ENCODE measurements at regions of chr2 and their contacts with region 1.

Region 1: GRCh38 chr2:195561203-195562032 is 95.6 kb upstream of the SLC39A10 start:
- DNase-seq: peak; percentile 7 to 85
- H3K4me3 ChIP-seq: no peak overlapping the region
- H3K27ac ChIP-seq: peak overlapping the region; percentile 32; the same call in 1 of the 2 replicates
- H3K4me1 ChIP-seq: peaks cover 10% of the 10 kb centered on the region; the same call in 1 of the 2 replicates
- H3K27me3 ChIP-seq: no peaks in the 10 kb centered on the region
- CTCF ChIP-seq: no peak

Region 2: GRCh38 chr2:195168369-195168768 is 393.0 kb before region 1 on chr2:
- CTCF ChIA-PET with region 1: no interaction called
- POLR2A ChIA-PET with region 1: no interaction called
- intact Hi-C with region 1: no loop called
- DNase-seq: no peak
- H3K4me3 ChIP-seq: no peak overlapping the region
- H3K27ac ChIP-seq: no peak overlapping the region
- H3K4me1 ChIP-seq: no peaks in the 10 kb centered on the region
- H3K27me3 ChIP-seq: no peaks in the 10 kb centered on the region
- CTCF ChIP-seq: no peak

Region 3: DNA sequence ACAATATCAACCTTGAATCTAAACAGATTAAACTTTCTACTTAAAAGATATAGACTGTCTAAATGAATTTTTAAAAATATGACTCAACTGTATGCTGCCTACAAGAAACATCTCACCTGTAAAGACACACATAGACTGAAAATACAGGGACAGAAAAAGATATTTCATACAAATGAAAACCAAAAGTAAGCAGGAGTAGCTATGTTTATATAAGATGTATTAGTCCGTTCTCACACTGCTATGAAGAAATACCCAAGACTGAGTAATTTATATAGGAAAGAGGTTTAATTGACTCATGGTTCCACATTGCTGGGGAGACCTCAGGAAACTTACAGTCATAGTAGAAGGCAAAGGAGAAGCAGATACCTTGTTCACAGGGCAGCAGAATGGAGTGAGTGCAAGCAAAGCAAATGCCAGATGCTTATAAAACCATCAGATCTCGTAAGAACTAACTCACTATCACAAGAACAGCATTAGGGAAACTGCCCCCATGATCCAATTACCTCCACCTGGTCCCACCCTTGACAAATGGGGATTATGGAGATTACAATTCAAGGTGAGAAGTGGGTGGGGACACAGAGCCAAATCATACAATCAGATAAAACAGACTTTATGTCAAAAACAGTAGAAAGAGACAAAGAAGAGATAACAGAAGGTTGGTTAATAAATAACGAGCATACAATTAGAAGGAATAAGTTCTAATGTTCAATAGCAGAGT is 118.8 kb before region 1 on chr2:
- CTCF ChIA-PET with region 1: no interaction called
- POLR2A ChIA-PET with region 1: no interaction called
- intact Hi-C with region 1: no loop called
- DNase-seq: no peak
- H3K4me3 ChIP-seq: no peak overlapping the region
- H3K27ac ChIP-seq: no peak overlapping the region
- H3K4me1 ChIP-seq: no peaks in the 10 kb centered on the region
- H3K27me3 ChIP-seq: no peaks in the 10 kb centered on the region
- CTCF ChIP-seq: no peak

Region 4: DNA sequence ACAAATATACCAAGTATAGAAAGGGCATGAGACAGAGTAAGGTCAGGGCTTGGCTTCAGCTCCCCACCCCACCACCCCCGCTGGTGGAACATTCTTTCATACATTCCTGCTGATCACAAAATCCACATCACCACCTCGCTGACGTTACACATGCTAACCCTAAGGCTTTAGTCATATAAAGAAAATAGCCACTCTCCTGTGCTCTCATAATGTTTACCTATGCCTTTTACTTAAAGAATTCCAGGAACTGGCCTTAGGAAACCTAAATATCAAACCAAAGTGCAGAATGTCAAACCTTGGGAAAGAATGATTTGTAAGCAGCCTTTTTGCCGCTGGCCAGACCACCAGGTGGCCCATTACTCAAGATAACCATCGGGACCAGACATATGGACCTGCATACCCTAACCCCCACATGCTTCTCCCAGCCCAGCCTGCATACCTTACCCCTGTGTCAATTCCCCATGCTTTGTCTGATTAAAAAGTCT is 40.7 kb before region 1 on chr2:
- CTCF ChIA-PET with region 1: no interaction called
- POLR2A ChIA-PET with region 1: no interaction called
- intact Hi-C with region 1: loop called (anchors 5 kb)
- DNase-seq: peak; percentile 57 to 69
- H3K4me3 ChIP-seq: no peak overlapping the region
- H3K27ac ChIP-seq: no peak overlapping the region
- H3K4me1 ChIP-seq: no peaks in the 10 kb centered on the region
- H3K27me3 ChIP-seq: no peaks in the 10 kb centered on the region
- CTCF ChIP-seq: no peak

Region 5: DNA sequence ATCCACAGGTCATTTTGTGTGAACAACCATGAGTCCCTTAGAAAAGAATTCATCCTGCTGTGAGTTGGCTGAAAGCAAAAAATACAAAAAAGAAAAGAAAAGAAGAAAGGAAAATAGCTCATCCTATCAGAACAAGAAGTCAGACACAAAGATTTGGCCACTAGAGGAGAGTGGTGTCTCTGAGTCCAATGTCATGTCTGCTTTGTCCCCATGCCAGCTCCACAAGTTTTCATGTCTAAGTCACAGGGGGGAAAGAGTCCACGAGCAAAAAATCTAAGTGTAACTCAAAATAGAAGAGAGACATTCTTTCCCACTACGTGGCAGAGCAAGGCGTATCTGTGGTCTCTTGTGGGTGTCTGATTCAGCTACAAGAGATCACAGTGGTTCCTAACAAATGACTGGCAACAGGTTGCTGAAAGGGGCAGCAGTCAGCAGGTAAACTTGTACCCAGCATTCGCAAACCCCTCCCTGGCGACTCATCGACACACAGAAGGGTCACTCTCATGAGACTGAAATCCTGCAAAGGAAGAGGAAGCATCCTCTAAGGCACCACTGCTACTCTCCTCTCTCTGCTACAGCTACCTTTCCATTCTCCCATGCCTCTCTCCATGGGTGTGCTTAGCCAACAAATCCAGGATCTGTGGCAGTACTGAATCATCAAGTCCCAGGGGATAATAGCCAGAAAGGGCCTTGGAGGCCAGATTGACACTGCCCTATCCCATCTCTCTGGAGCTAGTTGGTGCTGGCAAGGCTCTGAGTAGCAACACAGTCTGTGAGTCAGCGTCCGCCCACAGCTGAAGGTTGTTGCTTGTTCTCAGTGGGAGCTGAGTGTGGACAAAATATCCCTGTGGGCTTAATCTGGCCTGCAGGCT is 27.4 kb before region 1 on chr2:
- CTCF ChIA-PET with region 1: no interaction called
- POLR2A ChIA-PET with region 1: interaction called, 3 read pairs
- intact Hi-C with region 1: loop called (anchors 2 kb)
- DNase-seq: peak; percentile 47 to 61
- H3K4me3 ChIP-seq: no peak overlapping the region
- H3K27ac ChIP-seq: no peak overlapping the region
- H3K4me1 ChIP-seq: no peaks in the 10 kb centered on the region
- H3K27me3 ChIP-seq: no peaks in the 10 kb centered on the region
- CTCF ChIP-seq: no peak

Region 6: GRCh38 chr2:195575879-195576401 is 14.5 kb after region 1 on chr2:
- CTCF ChIA-PET with region 1: no interaction called
- POLR2A ChIA-PET with region 1: no interaction called
- intact Hi-C with region 1: no loop called
- DNase-seq: peak in 1 of 2 experiments; percentile 53
- H3K4me3 ChIP-seq: no peak overlapping the region
- H3K27ac ChIP-seq: no peak overlapping the region
- H3K4me1 ChIP-seq: peaks cover 10% of the 10 kb centered on the region
- H3K27me3 ChIP-seq: no peaks in the 10 kb centered on the region
- CTCF ChIP-seq: no peak

Region 7: DNA sequence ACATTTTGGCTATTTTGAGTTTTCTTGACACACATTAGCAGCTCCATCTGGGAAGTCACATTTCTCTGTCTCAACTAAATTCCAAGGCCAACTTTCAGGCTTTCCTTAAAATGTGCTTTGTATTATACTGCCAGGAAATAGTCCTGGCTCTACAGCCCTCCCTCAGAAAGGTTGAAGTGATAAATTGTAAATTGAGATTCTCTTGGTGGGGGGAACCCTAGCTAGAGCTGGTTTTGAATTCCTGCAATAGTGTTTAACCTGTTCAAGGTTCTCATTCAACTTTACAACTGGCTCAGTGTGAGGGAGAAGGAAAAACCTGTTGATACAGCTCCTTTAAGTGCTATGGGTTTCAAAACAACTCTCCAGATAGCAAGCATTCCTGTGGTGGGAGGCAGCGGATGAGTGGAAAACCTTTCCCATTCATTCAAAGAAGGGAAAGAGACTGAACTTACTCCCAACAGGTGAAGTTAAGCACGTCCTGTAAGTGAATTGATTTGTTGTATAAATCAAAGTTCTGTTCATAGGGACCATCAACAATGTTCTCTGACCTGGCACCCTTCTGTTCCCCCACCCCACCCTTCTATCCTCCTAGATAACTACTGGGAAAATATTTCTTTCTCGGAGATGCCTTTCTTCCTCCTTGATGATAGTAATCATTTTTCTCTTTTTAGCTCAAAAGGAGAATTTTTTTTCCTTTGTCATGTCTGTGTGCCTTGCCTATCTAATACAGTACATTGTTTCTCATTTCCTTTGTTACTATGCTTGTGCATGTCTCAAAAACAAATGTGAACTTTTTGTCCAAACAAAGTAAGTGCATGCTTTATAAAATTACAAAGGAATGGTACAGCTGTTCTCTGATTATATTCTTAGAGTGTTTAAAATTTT is 51.4 kb after region 1 on chr2:
- CTCF ChIA-PET with region 1: no interaction called
- POLR2A ChIA-PET with region 1: interaction called, 9 read pairs
- intact Hi-C with region 1: loop called (anchors 10 kb)
- DNase-seq: peak; percentile 57 to 80
- H3K4me3 ChIP-seq: peak overlapping the region; percentile 45
- H3K27ac ChIP-seq: peak overlapping the region; percentile 57
- H3K4me1 ChIP-seq: peaks cover 24% of the 10 kb centered on the region
- H3K27me3 ChIP-seq: no peaks in the 10 kb centered on the region
- CTCF ChIP-seq: no peak

Region 8: DNA sequence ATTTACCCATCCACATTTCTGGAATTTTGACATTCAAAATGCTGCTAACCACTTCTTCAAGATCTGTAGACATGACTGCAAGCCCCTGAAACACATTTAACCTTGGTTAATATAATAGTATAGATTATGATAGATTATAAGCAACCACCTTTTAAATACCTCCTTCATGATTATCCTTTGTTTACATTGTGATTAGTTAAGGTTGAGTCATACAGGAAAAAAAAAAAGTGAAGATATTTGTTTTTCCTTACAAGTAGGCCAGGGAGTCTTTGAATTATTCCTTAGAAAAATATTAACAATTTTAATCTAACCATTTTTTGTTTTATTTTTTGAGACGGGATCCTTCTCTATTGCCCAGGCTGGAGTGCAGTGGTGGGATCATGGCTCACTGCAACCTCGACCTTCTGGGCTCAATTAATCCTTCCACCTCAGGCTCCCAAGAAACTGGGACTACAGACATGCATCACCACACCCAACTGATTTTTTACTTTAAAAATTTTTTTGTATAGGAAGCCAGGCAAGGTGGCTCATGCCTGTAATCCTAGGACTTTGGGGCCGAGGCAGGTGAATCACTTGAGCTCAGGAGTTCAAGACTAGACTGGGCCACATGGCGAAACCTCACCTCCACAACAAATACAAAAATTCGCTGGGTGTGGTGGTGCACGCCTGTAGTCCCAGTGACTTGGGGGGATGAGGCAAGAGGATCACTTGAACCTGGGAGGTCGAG is 194.9 kb after region 1 on chr2:
- CTCF ChIA-PET with region 1: no interaction called
- POLR2A ChIA-PET with region 1: no interaction called
- intact Hi-C with region 1: no loop called
- DNase-seq: peak; percentile 9 to 68
- H3K4me3 ChIP-seq: no peak overlapping the region
- H3K27ac ChIP-seq: peak overlapping the region; percentile 38; the same call in 1 of the 2 replicates
- H3K4me1 ChIP-seq: peaks cover 13% of the 10 kb centered on the region; the same call in 1 of the 2 replicates
- H3K27me3 ChIP-seq: no peaks in the 10 kb centered on the region
- CTCF ChIP-seq: no peak

Measured in PC-9 (cell line).